ENCODE measurements at regions of chr1 and their contacts with region 1.

Region 1: DNA sequence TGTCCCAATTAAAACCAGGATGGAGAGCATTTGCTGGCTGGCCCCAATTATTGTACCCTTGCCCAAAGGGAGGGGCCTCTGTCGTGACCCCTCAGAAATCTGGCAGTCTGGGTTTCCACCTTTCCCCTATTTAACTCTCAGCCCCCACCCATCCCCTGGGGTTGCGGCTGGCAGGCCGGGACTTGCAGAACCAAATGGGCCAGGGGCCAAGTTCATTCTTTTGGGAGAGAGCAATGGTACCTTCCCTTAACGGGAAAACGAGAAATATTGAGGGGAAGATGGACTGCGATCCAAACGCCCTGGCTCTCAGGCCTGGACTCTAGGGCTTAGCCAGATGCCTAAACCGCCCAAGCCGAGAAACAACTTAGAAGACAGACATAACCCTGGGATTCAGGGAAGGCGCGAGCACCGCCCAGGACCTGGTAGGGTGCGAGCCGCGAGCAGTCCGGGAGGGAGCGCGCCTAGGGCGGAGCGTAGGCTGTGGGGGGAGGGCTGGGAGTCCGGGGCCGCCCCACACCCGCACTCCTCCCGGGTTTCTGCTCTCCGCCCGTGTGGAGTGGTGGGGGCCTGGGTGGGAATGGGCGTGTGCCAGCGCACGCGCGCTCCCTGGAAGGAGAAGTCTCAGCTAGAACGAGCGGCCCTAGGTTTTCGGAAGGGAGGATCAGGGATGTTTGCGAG is at the start of gene SLC27A3:
- DNase-seq: no peak
- H3K4me3 ChIP-seq: peak within 1 kb of the TSS; percentile 62 to 89 (median 74)
- H3K27ac ChIP-seq: no peak within 1 kb of the TSS
- H3K4me1 ChIP-seq: peaks cover 0 to 40% (median 36%) of the 10 kb centered on the region in 4 experiments
- H3K27me3 ChIP-seq: no peaks in the 10 kb centered on the region

Region 2: GRCh38 chr1:153677718-153678505 is 97.0 kb before region 1 on chr1:
- CTCF ChIA-PET with region 1: interaction called, 21 read pairs
- POLR2A ChIA-PET with region 1: no interaction called
- DNase-seq: peak; percentile 49 to 60 (median 59)
- H3K4me3 ChIP-seq: peak overlapping the region in 3 of 7 experiments; percentile 63 to 72 (median 66)
- H3K27ac ChIP-seq: no peak overlapping the region
- H3K4me1 ChIP-seq: peaks cover 0 to 23% (median 21%) of the 10 kb centered on the region in 4 experiments
- H3K27me3 ChIP-seq: peaks cover 5 to 43% (median 24%) of the 10 kb centered on the region in 5 experiments

Region 3: GRCh38 chr1:153698020-153698931 is 76.6 kb before region 1 on chr1:
- CTCF ChIA-PET with region 1: no interaction called
- POLR2A ChIA-PET with region 1: no interaction called
- DNase-seq: peak; percentile 18 to 71 (median 63)
- H3K4me3 ChIP-seq: peak overlapping the region in 6 of 7 experiments; percentile 36 to 81 (median 56)
- H3K27ac ChIP-seq: peak overlapping the region; percentile 64 to 70
- H3K4me1 ChIP-seq: peaks cover 2 to 17% (median 12%) of the 10 kb centered on the region in 4 experiments
- H3K27me3 ChIP-seq: no peaks in the 10 kb centered on the region

Region 4: DNA sequence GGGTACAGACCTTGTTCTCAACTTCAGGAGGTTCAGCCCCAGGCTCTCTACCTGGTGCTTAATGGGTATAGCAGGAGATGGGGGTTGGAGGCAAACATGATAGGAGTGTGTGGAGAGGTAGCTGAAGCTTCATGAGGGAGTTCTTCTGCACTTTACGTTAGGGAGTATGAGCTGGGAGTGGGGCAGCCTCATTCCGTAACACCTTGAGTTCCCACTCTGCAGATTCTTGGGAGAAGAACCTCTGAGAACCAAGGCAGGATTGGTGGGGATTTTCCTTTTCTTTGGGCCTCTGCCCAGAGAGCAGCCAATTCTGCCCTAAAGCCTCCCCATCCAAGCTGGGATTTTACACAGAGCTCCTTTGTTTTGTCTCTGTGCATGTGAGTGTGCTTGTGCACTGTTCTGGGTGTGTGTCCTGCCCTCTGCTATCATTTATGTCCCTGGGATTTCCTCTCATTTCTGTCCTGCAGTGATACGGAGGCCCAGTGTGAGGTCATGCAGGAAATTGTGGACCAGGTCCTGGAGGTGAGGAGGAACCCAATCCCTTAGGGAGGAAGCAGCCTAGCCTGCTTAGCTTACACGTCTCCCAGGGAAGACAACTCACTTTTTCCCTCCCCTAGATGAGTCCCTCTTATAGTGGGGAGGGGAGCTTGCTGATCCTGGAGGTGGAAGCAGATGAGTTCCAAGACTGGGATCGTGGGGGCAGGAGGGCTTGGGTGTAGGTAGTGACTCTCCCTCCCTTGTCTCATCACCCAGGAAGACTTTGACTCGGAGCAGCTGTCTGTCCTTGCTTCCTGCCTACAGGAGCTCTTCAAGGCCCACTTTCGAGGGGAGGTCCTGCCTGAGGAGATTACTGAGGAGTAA is 11.3 kb before region 1 on chr1:
- CTCF ChIA-PET with region 1: interaction called, 10 read pairs
- POLR2A ChIA-PET with region 1: no interaction called
- DNase-seq: no peak
- H3K4me3 ChIP-seq: no peak overlapping the region
- H3K27ac ChIP-seq: no peak overlapping the region
- H3K4me1 ChIP-seq: no peaks in the 10 kb centered on the region
- H3K27me3 ChIP-seq: no peaks in the 10 kb centered on the region

Region 5: GRCh38 chr1:153922972-153923925 is 148.3 kb after region 1 on chr1 and contains the start of gene GATAD2B:
- CTCF ChIA-PET with region 1: no interaction called
- POLR2A ChIA-PET with region 1: no interaction called
- DNase-seq: peak; percentile 100
- H3K4me3 ChIP-seq: peak within 1 kb of the TSS; percentile 82 to 99 (median 95)
- H3K27ac ChIP-seq: peak within 1 kb of the TSS; percentile 94 to 96
- H3K4me1 ChIP-seq: peaks cover 32 to 46% (median 43%) of the 10 kb centered on the region in 4 experiments
- H3K27me3 ChIP-seq: no peaks in the 10 kb centered on the region

Measured in common myeloid progenitor, CD34-positive (primary cell).